ENCODE measurements at regions of chr1 and their contacts with region 1.

Region 1: DNA sequence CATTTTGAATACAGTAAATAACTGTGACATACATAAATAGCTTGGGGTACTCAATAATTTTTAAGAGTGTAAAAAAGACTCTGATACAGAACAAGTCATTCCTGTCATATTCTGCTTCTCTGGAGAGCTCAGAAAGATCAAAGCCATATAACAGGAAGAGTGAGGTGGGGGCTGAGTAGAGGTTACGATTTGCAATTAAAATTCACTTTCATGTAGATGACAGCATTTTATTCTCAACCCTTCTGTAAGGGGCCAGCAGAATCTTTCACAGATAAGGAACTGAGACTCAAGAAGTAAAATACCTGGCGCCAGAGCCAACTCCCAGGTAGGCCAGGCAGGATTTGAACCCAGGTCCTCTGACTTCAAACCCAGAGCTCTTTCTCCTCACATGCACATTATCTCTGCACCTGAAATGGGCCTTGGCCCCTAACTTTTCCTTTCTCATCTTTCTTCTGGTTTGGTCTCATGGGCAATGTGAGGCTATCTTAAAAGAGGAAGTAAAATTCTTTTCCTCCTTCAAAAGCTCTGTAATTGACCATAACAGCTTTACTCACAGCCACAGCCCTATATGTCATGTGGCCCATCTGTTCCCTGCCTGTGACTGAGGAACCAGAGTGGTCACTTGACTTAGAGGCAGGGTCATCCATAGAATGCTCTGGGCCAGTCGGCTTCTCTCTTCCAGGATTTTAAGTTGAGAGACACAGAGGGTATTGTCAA is 80.9 kb upstream of the SYT6 start:
- DNase-seq: no peak
- H3K4me3 ChIP-seq: no peak overlapping the region
- H3K27ac ChIP-seq: no peak overlapping the region
- H3K4me1 ChIP-seq: no peaks in the 10 kb centered on the region
- H3K27me3 ChIP-seq: peaks cover 5% of the 10 kb centered on the region
- CTCF ChIP-seq: no peak

Region 2: DNA sequence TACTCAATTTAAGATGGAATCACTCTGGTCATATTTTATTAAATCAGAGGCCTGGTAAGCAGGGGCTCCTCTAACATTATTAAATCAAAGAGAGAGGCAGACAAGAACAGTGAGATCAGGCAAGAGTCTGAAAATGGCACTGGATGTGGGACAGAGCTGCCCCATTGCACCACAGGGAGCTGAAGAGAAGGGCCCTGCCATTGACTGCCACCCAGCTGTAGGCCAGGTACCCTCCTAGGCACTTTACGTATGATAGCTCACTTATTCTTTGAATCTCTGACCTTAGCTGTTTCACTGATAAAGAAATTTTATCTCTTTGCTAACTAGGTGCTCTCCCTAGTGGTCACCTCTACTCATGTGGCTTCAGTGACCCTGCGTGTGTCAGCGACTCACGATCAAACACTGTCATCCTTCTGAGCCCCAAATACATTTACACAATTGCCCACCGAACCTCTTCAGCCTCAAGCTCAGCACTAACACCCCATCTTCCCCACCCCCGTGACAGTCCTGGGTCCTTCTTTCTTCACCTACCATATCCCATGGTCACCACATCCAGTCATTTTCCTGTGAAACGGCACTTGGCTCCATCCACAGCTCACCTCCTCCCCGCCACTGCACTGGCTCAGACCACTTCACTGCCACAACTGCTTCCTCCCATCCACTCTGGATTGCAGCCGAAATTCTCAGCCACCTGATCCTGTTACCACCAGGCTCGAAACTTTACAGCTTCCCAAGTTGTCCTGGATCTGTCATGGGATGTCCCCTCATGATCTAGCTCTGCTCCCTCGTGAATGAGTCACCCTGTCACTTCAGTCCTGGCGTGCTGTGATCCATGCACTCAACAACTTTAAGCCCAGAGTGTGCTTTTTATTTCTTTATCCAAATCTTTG is 16.4 kb after region 1 on chr1:
- CTCF ChIA-PET with region 1: no interaction called
- dilution Hi-C with region 1: no loop called
- in situ Hi-C with region 1: no loop called
- intact Hi-C with region 1: no loop called
- DNase-seq: no peak
- H3K4me3 ChIP-seq: no peak overlapping the region
- H3K27ac ChIP-seq: no peak overlapping the region
- H3K4me1 ChIP-seq: no peaks in the 10 kb centered on the region
- H3K27me3 ChIP-seq: no peaks in the 10 kb centered on the region
- CTCF ChIP-seq: no peak

Region 3: DNA sequence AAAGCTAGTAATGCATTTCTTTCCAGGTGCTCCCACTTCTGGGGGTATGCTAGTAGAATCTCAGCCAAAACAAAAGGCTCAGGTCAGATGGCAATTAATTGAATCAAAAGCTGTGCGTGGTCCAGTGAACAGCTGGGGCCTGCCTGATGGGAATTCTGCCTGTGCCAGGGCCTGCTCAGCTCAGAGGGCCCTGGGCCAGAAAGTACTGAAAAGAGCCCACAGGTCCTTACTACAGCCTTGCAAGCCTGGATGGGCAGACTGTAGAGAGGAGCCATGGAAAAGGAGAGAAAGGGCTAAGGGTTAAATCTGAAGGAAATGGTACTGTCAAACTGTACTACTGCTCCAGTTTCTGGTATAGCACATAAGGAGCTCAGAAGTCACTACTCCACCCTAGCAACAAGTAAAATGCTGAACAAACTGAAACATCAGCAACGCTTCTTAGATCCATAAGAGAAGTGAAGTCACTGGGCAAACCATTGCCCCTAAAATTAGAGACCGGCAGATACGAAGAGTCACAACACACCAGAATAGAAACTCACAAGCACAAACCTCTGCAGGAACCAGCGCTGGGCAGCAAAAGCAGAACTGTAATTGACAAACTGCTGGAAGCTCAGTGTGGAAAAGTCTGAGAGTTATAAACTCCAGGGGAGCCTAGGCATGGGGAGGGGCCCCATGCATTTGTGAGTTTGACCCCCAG is 40.2 kb after region 1 on chr1:
- CTCF ChIA-PET with region 1: no interaction called
- dilution Hi-C with region 1: loop called (anchors 5 kb)
- in situ Hi-C with region 1: no loop called
- intact Hi-C with region 1: no loop called
- DNase-seq: no peak
- H3K4me3 ChIP-seq: no peak overlapping the region
- H3K27ac ChIP-seq: no peak overlapping the region
- H3K4me1 ChIP-seq: no peaks in the 10 kb centered on the region
- H3K27me3 ChIP-seq: peaks cover 2% of the 10 kb centered on the region
- CTCF ChIP-seq: no peak

Region 4: GRCh38 chr1:114310695-114311271 is 76.2 kb after region 1 on chr1:
- CTCF ChIA-PET with region 1: no interaction called
- dilution Hi-C with region 1: no loop called
- in situ Hi-C with region 1: no loop called
- intact Hi-C with region 1: no loop called
- DNase-seq: no peak
- H3K4me3 ChIP-seq: no peak overlapping the region
- H3K27ac ChIP-seq: no peak overlapping the region
- H3K4me1 ChIP-seq: no peaks in the 10 kb centered on the region
- H3K27me3 ChIP-seq: no peaks in the 10 kb centered on the region
- CTCF ChIP-seq: no peak

Measured in mammary epithelial cell (primary cell).